ENCODE measurements at regions of chr2 and their contacts with region 1.

Region 1: GRCh38 chr2:85561317-85561979 is at the start of gene GGCX:
- DNase-seq: peak; percentile 99
- ATAC-seq: peak; percentile 93
- total RNA-seq, gene GGCX: 26.9 TPM

Region 2: GRCh38 chr2:85445316-85446295 is 115.8 kb before region 1 on chr2:
- intact Hi-C with region 1: no loop called
- DNase-seq: no peak
- ATAC-seq: peak; percentile 79

Region 3: DNA sequence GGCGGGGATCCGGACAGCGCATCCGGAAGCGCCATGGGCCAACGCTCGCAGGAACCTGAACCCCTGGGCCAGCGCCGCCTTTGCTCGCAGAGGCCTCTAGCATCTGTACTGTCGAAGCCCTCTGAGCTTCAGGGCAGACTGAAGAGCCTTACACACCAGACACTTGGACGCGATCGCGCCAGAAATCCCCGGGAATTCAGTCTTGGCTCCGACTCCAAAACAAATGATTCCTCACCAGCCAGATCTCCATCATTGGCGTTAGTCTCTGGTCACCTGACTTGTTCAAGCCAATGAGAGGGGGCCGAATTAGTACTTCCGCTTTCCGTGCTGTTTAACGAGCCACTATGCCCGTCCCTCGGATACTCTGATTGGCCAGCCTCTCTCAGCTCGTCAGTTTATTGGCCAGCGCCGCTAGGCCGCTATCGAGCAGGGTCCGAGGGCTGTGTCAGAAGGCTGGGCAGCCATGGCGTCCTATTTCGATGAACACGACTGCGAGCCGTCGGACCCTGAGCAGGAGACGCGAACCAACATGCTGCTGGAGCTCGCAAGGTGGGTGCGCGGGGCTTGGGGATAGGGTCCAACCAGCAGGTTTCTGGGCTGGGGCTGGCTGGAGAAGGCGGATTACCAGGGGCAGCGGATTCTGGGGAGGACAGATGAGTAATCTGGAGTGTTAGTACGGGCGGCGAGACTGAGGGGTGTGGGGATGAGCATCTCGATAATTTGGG is 34.0 kb after region 1 on chr2 and contains the start of gene RNF181:
- intact Hi-C with region 1: loop called (anchors 5 kb)
- DNase-seq: peak; percentile 97
- ATAC-seq: peak; percentile 97
- total RNA-seq, gene RNF181: 87.8 TPM

Measured in Right ventricle myocardium inferior (tissue), 1 donor.